Activated T-helper 2 cell treated with anti-CD3 and anti-CD28 coated beads, Interferon-gamma antibody, Interleukin-2, Interleukin-4, amounts not matched to agents 10 μg/mL and 5 μg/mL and 100 μg/mL, durations not matched to agents 14 hours and 24 hours and 36 hours (primary cell): ENCODE measurements at regions of chr2 and their contacts with region 1.

Region 1: DNA sequence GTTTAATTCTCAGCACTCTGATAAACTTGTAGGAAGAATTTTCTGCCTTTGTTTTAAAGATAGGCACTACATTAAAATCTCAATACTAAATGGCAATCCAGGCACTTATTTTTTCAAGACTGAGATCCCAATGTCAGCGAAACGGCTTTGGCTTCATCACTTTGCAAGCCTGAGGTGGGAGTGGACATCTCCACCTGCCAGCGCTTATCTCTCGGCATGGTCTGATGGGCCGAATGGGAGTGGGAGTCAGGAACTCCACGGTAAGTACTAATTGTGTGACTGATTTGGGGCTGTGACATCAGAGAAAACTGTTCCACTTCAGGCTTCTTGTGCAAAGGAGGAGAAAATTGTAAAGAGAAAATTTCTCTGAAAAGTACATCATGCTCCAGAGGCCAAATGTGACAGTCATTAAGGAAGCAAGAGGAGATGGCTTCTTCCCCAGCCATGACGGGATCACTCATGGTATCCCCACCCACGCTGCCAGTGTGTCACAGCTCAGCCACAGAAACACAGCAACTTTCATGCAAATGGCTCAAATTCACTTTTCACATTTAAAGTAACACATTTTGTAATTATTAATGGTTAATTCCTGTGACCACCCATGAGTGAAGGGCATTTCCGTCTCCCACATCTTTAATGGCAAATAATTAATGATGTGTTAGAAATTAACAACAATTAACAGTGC is 385.5 kb upstream of the HNRNPA3 start:
- DNase-seq: no peak
- H3K4me3 Mint-ChIP-seq: no peak overlapping the region
- H3K27ac Mint-ChIP-seq: peak overlapping the region; percentile 73
- H3K4me1 Mint-ChIP-seq: peaks cover 26% of the 10 kb centered on the region
- H3K27me3 Mint-ChIP-seq: peaks cover 14% of the 10 kb centered on the region

Region 2: DNA sequence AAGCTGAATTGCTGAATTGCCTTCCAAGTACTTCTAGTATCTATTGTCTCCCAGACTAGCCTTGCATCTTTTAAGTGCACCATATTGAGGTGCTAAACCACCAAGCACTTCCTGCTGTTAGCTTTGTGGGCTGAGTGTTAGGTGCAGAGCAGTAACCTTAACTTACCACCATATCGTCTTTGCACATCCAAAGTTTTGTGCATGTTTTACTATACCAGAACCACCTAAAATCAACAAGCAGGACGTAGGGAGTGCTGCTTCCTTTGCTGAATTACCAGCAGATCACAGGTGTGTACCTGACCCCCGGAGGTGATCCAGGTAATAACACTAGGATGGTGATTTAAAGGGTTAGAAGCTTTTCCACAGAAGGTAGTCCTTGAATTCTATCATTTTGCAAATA is 25.5 kb after region 1 on chr2:
- intact Hi-C with region 1: loop called (anchors 1 kb)
- DNase-seq: peak; percentile 26
- H3K4me3 Mint-ChIP-seq: no peak overlapping the region
- H3K27ac Mint-ChIP-seq: no peak overlapping the region
- H3K4me1 Mint-ChIP-seq: peaks cover 41% of the 10 kb centered on the region
- H3K27me3 Mint-ChIP-seq: peaks cover 2% of the 10 kb centered on the region

Region 3: GRCh38 chr2:176873405-176873804 is 46.3 kb after region 1 on chr2:
- intact Hi-C with region 1: no loop called
- DNase-seq: no peak
- H3K4me3 Mint-ChIP-seq: no peak overlapping the region
- H3K27ac Mint-ChIP-seq: no peak overlapping the region
- H3K4me1 Mint-ChIP-seq: no peaks in the 10 kb centered on the region
- H3K27me3 Mint-ChIP-seq: peaks cover 4% of the 10 kb centered on the region

Region 4: GRCh38 chr2:176931588-176932563 is 104.8 kb after region 1 on chr2:
- intact Hi-C with region 1: loop called (anchors 2 kb)
- DNase-seq: peak; percentile 31
- H3K4me3 Mint-ChIP-seq: no peak overlapping the region
- H3K27ac Mint-ChIP-seq: peak overlapping the region; percentile 93
- H3K4me1 Mint-ChIP-seq: peaks cover 28% of the 10 kb centered on the region
- H3K27me3 Mint-ChIP-seq: no peaks in the 10 kb centered on the region

Region 5: DNA sequence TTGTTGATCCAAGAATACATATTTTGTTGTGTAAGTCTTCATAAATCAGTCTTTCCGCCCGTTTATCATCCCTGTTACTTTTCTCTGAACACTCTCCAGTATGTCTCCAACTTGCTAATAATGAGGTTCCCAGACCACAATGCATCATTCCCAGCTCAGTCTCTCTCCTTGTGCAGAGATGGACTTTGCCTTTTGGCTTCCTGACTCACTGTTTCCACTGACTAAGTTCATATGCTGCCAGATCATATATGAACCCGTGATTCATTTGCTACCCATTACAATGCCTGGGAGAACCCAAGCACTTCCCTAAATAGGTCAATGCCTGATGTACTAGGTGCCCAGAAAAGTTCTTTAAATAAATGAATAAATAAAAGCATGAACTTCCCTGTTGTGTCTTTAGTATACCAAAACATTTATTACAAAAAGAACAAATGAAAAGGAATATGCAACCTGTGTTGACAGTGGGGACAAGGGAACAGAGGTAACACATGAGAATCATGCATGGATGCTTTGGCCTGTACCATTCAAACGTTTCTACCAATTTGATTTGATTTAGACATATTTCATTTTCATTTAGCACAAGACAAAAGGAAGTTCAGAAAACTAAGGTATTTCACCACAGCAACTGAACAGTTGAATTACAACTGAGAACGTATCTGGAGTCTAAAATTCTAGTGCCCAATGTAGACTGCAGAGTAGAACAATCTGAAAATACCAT is 170.1 kb after region 1 on chr2:
- intact Hi-C with region 1: loop called (anchors 2 kb)
- DNase-seq: no peak
- H3K4me3 Mint-ChIP-seq: no peak overlapping the region
- H3K27ac Mint-ChIP-seq: peak overlapping the region; percentile 78
- H3K4me1 Mint-ChIP-seq: peaks cover 24% of the 10 kb centered on the region
- H3K27me3 Mint-ChIP-seq: peaks cover 10% of the 10 kb centered on the region